ENCODE measurements at regions of chr6 and their contacts with region 1.

Region 1: GRCh38 chr6:24910961-24911712 is 24.6 kb downstream of the RIPOR2 start:
- DNase-seq: peak in 7 of 9 experiments; percentile 29 to 77 (median 68)
- ATAC-seq: peak; percentile 38
- H3K4me3 ChIP-seq: peak overlapping the region; percentile 57 to 62
- H3K4me3 Mint-ChIP-seq: peak overlapping the region; percentile 94
- H3K27ac ChIP-seq: peak overlapping the region; percentile 62 to 69
- H3K27ac Mint-ChIP-seq: peak overlapping the region; percentile 98
- H3K4me1 ChIP-seq: peaks cover 92% of the 10 kb centered on the region
- H3K4me1 Mint-ChIP-seq: peaks cover 93% of the 10 kb centered on the region
- H3K27me3 ChIP-seq: no peaks in the 10 kb centered on the region
- H3K27me3 Mint-ChIP-seq: no peaks in the 10 kb centered on the region
- CTCF ChIP-seq: no peak

Region 2: GRCh38 chr6:24888715-24889370 is 22.3 kb before region 1 on chr6:
- CTCF ChIA-PET with region 1: interaction called, 8 read pairs
- POLR2A ChIA-PET with region 1: interaction called, 12 read pairs
- intact Hi-C with region 1: no loop called
- DNase-seq: no peak
- ATAC-seq: peak; percentile 62
- H3K4me3 ChIP-seq: no peak overlapping the region
- H3K4me3 Mint-ChIP-seq: peak overlapping the region; percentile 30
- H3K27ac ChIP-seq: peak overlapping the region in 1 of 2 experiments; percentile 48
- H3K27ac Mint-ChIP-seq: peak overlapping the region; percentile 79
- H3K4me1 ChIP-seq: peaks cover 84% of the 10 kb centered on the region
- H3K4me1 Mint-ChIP-seq: peaks cover 88% of the 10 kb centered on the region
- H3K27me3 ChIP-seq: no peaks in the 10 kb centered on the region
- H3K27me3 Mint-ChIP-seq: no peaks in the 10 kb centered on the region
- CTCF ChIP-seq: no peak

Region 3: GRCh38 chr6:24927985-24928745 is 17.0 kb after region 1 on chr6:
- CTCF ChIA-PET with region 1: interaction called, 161 read pairs
- POLR2A ChIA-PET with region 1: interaction called, 59 read pairs
- intact Hi-C with region 1: loop called (anchors 1 to 2 kb)
- DNase-seq: peak in 1 of 9 experiments; percentile 51
- ATAC-seq: no peak
- H3K4me3 ChIP-seq: peak overlapping the region; percentile 38 to 89
- H3K4me3 Mint-ChIP-seq: peak overlapping the region; percentile 97
- H3K27ac ChIP-seq: peak overlapping the region; percentile 50 to 73
- H3K27ac Mint-ChIP-seq: peak overlapping the region; percentile 95
- H3K4me1 ChIP-seq: peaks cover 73% of the 10 kb centered on the region
- H3K4me1 Mint-ChIP-seq: peaks cover 82% of the 10 kb centered on the region
- H3K27me3 ChIP-seq: no peaks in the 10 kb centered on the region
- H3K27me3 Mint-ChIP-seq: no peaks in the 10 kb centered on the region
- CTCF ChIP-seq: no peak

Region 4: GRCh38 chr6:25122001-25122400 is 210.9 kb after region 1 on chr6:
- CTCF ChIA-PET with region 1: no interaction called
- POLR2A ChIA-PET with region 1: no interaction called
- intact Hi-C with region 1: no loop called
- DNase-seq: no peak
- ATAC-seq: no peak
- H3K4me3 ChIP-seq: no peak overlapping the region
- H3K4me3 Mint-ChIP-seq: no peak overlapping the region
- H3K27ac ChIP-seq: no peak overlapping the region
- H3K27ac Mint-ChIP-seq: no peak overlapping the region
- H3K4me1 ChIP-seq: peaks cover 5% of the 10 kb centered on the region
- H3K4me1 Mint-ChIP-seq: peaks cover 23% of the 10 kb centered on the region
- H3K27me3 ChIP-seq: no peaks in the 10 kb centered on the region
- H3K27me3 Mint-ChIP-seq: no peaks in the 10 kb centered on the region
- CTCF ChIP-seq: no peak

Measured in CD8-positive, alpha-beta T cell (primary cell).